CD4-positive, alpha-beta memory T cell (primary cell): ENCODE measurements at regions of chr10 and their contacts with region 1.

Region 1: GRCh38 chr10:3852147-3852904 is 67.3 kb upstream of the KLF6 start:
- DNase-seq: peak; percentile 64 to 95 (median 79)
- H3K4me3 ChIP-seq: no peak overlapping the region
- H3K4me3 Mint-ChIP-seq: peak overlapping the region in 6 of 8 donors; percentile 17 to 72 (median 60)
- H3K27ac ChIP-seq: peak overlapping the region; percentile 59
- H3K27ac Mint-ChIP-seq: peak overlapping the region; percentile 81 to 98 (median 92)
- H3K4me1 ChIP-seq: peaks cover 29% of the 10 kb centered on the region
- H3K4me1 Mint-ChIP-seq: peaks cover 15 to 45% (median 30%) of the 10 kb centered on the region in 4 donors
- H3K27me3 ChIP-seq: no peaks in the 10 kb centered on the region
- H3K27me3 Mint-ChIP-seq: no peaks in the 10 kb centered on the region

Region 2: GRCh38 chr10:3025300-3025699 is 827.0 kb before region 1 on chr10:
- CTCF ChIA-PET with region 1: no interaction called
- POLR2A ChIA-PET with region 1: no interaction called
- intact Hi-C with region 1: no loop called
- DNase-seq: no peak
- H3K4me3 ChIP-seq: no peak overlapping the region
- H3K4me3 Mint-ChIP-seq: no peak overlapping the region
- H3K27ac ChIP-seq: no peak overlapping the region
- H3K27ac Mint-ChIP-seq: no peak overlapping the region
- H3K4me1 ChIP-seq: no peaks in the 10 kb centered on the region
- H3K4me1 Mint-ChIP-seq: no peaks in the 10 kb centered on the region
- H3K27me3 ChIP-seq: peaks cover 4% of the 10 kb centered on the region
- H3K27me3 Mint-ChIP-seq: peaks cover 13 to 45% of the 10 kb centered on the region in 2 donors

Region 3: DNA sequence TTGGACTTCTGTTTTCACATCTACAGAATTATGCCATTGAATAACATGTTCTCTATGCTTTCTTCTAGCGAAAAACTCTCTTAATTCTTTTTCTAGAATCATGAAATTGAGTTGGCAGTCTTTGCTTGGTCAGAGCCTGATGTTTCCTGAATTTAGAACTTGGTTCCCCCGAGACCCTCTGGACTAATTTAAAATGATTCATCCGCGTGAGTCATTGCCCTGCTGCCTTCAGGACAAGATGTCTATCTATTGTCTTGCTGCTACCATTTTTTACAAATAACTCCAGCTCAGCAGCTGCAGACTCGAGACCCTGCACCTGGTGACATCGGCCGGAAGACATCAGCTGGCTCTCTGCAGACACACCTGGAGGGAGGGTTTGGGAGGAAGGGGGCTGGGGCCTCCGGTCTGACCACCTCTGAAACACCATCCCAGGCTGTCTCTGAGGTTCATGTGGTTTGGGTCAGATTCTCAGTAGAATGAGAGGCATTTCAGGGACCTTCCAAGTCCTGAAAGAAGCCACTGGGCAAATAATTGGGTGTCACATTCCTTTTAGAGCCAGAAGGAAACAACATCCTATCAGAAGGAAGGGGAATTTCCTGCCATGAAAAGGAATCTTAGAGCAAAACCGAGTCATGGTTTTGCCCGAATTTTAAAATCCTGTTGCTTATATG is 46.4 kb before region 1 on chr10:
- CTCF ChIA-PET with region 1: no interaction called
- POLR2A ChIA-PET with region 1: interaction called, 53 read pairs
- intact Hi-C with region 1: loop called (anchors 1 kb)
- DNase-seq: peak; percentile 42 to 84 (median 55)
- H3K4me3 ChIP-seq: peak overlapping the region; percentile 2 to 41
- H3K4me3 Mint-ChIP-seq: peak overlapping the region in 7 of 8 donors; percentile 38 to 85 (median 76)
- H3K27ac ChIP-seq: peak overlapping the region; percentile 99
- H3K27ac Mint-ChIP-seq: no peak overlapping the region
- H3K4me1 ChIP-seq: peaks cover 98% of the 10 kb centered on the region
- H3K4me1 Mint-ChIP-seq: peaks cover 4 to 75% (median 69%) of the 10 kb centered on the region in 4 donors
- H3K27me3 ChIP-seq: no peaks in the 10 kb centered on the region
- H3K27me3 Mint-ChIP-seq: no peaks in the 10 kb centered on the region

Region 4: GRCh38 chr10:3811291-3811870 is 40.9 kb before region 1 on chr10:
- CTCF ChIA-PET with region 1: no interaction called
- POLR2A ChIA-PET with region 1: interaction called, 53 read pairs
- intact Hi-C with region 1: no loop called
- DNase-seq: peak; percentile 49 to 79 (median 66)
- H3K4me3 ChIP-seq: peak overlapping the region; percentile 1 to 39
- H3K4me3 Mint-ChIP-seq: peak overlapping the region; percentile 76 to 87 (median 82)
- H3K27ac ChIP-seq: peak overlapping the region; percentile 99
- H3K27ac Mint-ChIP-seq: no peak overlapping the region
- H3K4me1 ChIP-seq: peaks cover 79% of the 10 kb centered on the region
- H3K4me1 Mint-ChIP-seq: peaks cover 18 to 89% (median 66%) of the 10 kb centered on the region in 4 donors
- H3K27me3 ChIP-seq: no peaks in the 10 kb centered on the region
- H3K27me3 Mint-ChIP-seq: no peaks in the 10 kb centered on the region

Region 5: GRCh38 chr10:3828404-3829155 is 23.7 kb before region 1 on chr10:
- CTCF ChIA-PET with region 1: interaction called, 3 read pairs
- POLR2A ChIA-PET with region 1: interaction called, 14 read pairs
- intact Hi-C with region 1: no loop called
- DNase-seq: peak; percentile 53 to 70 (median 62)
- H3K4me3 ChIP-seq: peak overlapping the region; percentile 32 to 55
- H3K4me3 Mint-ChIP-seq: peak overlapping the region; percentile 85 to 91 (median 88)
- H3K27ac ChIP-seq: peak overlapping the region; percentile 78
- H3K27ac Mint-ChIP-seq: peak overlapping the region; percentile 84 to 98 (median 95)
- H3K4me1 ChIP-seq: peaks cover 21% of the 10 kb centered on the region
- H3K4me1 Mint-ChIP-seq: peaks cover 21 to 43% (median 33%) of the 10 kb centered on the region in 4 donors
- H3K27me3 ChIP-seq: no peaks in the 10 kb centered on the region
- H3K27me3 Mint-ChIP-seq: no peaks in the 10 kb centered on the region

Region 6: DNA sequence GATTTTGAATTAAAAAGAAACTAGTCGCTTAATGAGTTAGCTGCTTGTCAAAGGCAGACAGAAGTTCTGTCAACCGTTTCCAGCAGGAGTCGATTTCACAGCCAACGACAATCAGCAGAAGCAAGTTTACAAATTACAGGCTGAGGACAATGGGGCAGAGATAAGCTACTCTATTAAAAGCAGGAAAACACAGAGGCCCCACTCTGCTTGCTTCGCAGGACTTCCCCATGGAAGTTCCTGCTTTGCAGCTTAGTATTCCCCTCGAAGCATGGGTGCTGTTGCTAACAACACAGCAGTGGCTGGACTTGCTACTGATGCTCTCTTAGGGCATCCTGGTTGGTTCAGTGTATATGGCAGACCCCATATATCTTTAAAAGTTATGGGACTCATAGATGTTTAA is 16.6 kb before region 1 on chr10:
- CTCF ChIA-PET with region 1: interaction called, 3 read pairs
- POLR2A ChIA-PET with region 1: interaction called, 14 read pairs
- intact Hi-C with region 1: no loop called
- DNase-seq: no peak
- H3K4me3 ChIP-seq: no peak overlapping the region
- H3K4me3 Mint-ChIP-seq: peak overlapping the region in 7 of 8 donors; percentile 31 to 72 (median 47)
- H3K27ac ChIP-seq: no peak overlapping the region
- H3K27ac Mint-ChIP-seq: peak overlapping the region in 5 of 7 donors; percentile 30 to 73 (median 52)
- H3K4me1 ChIP-seq: peaks cover 16% of the 10 kb centered on the region
- H3K4me1 Mint-ChIP-seq: peaks cover 12 to 31% (median 28%) of the 10 kb centered on the region in 4 donors
- H3K27me3 ChIP-seq: no peaks in the 10 kb centered on the region
- H3K27me3 Mint-ChIP-seq: no peaks in the 10 kb centered on the region

Region 7: DNA sequence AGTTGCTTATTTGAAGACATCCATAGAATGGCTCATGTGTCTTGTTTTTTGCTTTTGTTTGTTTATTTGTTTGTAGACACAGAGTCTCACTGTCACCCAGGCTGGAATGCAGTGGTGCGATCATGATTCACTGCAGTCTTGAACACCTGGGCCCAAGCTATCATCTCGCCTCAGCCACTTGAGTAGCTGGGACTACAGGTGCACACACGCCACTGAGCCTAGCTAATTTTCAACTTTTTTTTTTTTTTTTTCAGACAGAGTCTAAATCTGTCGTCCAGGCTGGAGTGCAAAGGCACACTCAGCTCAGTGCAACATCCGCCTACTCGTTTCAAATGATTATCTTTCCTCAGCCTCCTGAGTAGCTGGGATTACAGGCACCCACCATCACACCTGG is 15.9 kb after region 1 on chr10:
- CTCF ChIA-PET with region 1: interaction called, 3 read pairs
- POLR2A ChIA-PET with region 1: interaction called, 67 read pairs
- intact Hi-C with region 1: loop called (anchors 1 kb)
- DNase-seq: no peak
- H3K4me3 ChIP-seq: no peak overlapping the region
- H3K4me3 Mint-ChIP-seq: peak overlapping the region in 2 of 8 donors; percentile 15 to 64
- H3K27ac ChIP-seq: no peak overlapping the region
- H3K27ac Mint-ChIP-seq: peak overlapping the region; percentile 24 to 85 (median 69)
- H3K4me1 ChIP-seq: peaks cover 56% of the 10 kb centered on the region
- H3K4me1 Mint-ChIP-seq: peaks cover 47 to 73% (median 59%) of the 10 kb centered on the region in 4 donors
- H3K27me3 ChIP-seq: no peaks in the 10 kb centered on the region
- H3K27me3 Mint-ChIP-seq: no peaks in the 10 kb centered on the region

Region 8: GRCh38 chr10:3887885-3888476 is 35.7 kb after region 1 on chr10:
- CTCF ChIA-PET with region 1: no interaction called
- POLR2A ChIA-PET with region 1: interaction called, 17 read pairs
- intact Hi-C with region 1: no loop called
- DNase-seq: peak; percentile 70 to 94 (median 74)
- H3K4me3 ChIP-seq: no peak overlapping the region
- H3K4me3 Mint-ChIP-seq: peak overlapping the region; percentile 62 to 82 (median 70)
- H3K27ac ChIP-seq: peak overlapping the region; percentile 77
- H3K27ac Mint-ChIP-seq: peak overlapping the region; percentile 91 to 99 (median 98)
- H3K4me1 ChIP-seq: peaks cover 53% of the 10 kb centered on the region
- H3K4me1 Mint-ChIP-seq: peaks cover 23 to 68% (median 49%) of the 10 kb centered on the region in 4 donors
- H3K27me3 ChIP-seq: no peaks in the 10 kb centered on the region
- H3K27me3 Mint-ChIP-seq: no peaks in the 10 kb centered on the region